HepG2 (cell line): ENCODE measurements at regions of chr16 and their contacts with region 1.

Region 1: DNA sequence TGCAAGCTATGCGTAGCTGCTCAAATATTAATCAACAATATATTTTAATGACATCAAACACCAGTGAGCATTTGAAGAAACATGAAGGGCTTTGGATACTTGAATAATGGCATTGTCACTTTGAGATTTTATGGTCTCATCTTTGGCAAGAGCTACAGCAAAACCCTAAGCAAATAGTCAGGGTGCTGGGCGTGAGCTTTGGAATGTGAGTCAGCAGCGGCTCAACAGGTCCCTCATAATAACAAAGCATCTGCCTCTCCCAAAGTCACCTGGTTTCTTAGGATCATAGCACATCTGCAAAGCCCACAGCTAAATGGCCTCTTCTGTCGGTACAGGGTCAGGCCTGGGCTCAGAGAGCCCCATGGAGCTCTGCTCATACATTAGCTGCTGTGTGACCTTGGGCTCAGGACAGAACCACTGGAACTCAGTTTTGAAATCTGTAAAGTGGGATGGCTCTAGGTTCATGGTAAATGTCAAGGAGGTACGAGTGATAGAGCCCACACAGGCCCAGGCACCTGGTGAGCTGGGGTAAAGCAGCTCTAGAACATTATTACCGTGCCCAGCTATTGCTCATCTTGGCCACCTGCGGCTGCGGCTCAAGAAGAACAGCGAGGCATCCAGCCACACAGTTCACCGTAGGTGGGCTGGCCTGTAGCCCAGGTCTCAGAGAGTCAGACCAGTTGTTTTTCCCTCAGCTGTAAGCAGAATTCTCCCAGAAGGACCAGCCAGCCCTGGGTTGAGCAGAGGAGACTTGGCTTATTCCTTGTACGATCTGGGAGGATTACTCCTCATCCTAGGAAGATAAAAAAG is 544.5 kb upstream of the CDH11 start:
- DNase-seq: peak; percentile 81
- ATAC-seq: peak; percentile 91
- H3K4me3 ChIP-seq: no peak overlapping the region
- H3K27ac ChIP-seq: no peak overlapping the region
- H3K4me1 ChIP-seq: peaks cover 37% of the 10 kb centered on the region
- H3K27me3 ChIP-seq: no peaks in the 10 kb centered on the region
- CTCF ChIP-seq: no peak
- EP300 ChIP-seq: peak; percentile 12 to 69; a peak in 1 of 4 replicates
- POLR2A ChIP-seq: no peak
- RAD21 ChIP-seq: no peak

Region 2: GRCh38 chr16:65641762-65642289 is 24.5 kb before region 1 on chr16:
- CTCF ChIA-PET with region 1: no interaction called
- POLR2A ChIA-PET with region 1: no interaction called
- in situ Hi-C with region 1: no loop called
- intact Hi-C with region 1: loop called (anchors 1 kb)
- DNase-seq: peak; percentile 90
- ATAC-seq: peak; percentile 94
- H3K4me3 ChIP-seq: no peak overlapping the region
- H3K27ac ChIP-seq: peak overlapping the region; percentile 62
- H3K4me1 ChIP-seq: peaks cover 66% of the 10 kb centered on the region
- H3K27me3 ChIP-seq: no peaks in the 10 kb centered on the region
- CTCF ChIP-seq: no peak
- EP300 ChIP-seq: peak in 1 of 2 experiments; percentile 84; a peak in 2 of 4 replicates
- POLR2A ChIP-seq: no peak
- RAD21 ChIP-seq: no peak